ENCODE measurements at regions of chr2 and their contacts with region 1.

Region 1: DNA sequence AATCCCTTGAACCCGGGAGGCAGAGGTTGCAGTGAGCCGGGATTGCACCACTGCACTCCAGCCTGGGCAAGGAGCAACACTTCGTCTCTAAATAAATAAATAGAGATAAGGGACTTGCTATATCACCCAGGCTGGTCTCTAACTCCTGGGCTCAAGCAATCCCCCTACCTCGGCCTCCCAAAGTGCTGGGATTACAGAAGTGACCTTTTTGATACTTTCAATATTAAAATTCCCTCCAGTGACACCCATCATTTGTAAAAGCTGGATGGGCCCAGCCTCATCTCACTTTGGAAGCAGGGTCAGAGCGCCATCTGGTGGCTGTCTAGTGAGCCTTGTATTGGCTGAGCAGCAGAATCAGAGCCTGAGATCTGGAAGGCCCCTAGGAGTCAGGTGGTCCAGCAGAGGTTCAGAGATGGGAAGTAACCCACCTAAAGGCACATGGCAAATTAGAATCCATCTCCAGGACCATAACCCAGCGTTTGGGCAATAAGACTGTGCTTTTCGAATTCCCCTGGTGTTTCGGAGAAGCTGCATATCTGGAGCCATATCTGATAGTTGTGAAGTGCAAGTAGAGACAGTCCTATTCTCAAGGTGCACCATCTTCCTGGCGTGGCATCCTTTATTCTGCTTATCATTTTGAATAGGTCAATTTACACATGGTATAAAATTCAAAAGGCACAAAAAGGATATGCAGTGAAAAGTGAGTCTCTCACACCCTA is 18.3 kb upstream of the SLC35F6 start:
- DNase-seq: peak; percentile 78 to 90 (median 83)
- ATAC-seq: peak; percentile 93
- H3K4me3 ChIP-seq: no peak overlapping the region
- H3K27ac ChIP-seq: no peak overlapping the region
- H3K4me1 ChIP-seq: peaks cover 9 to 14% of the 10 kb centered on the region in 2 experiments
- H3K27me3 ChIP-seq: 0 out of 5 replicates have a peak, but pooled peaks cover 0 to 5% of the 10 kb centered on the region in 2 experiments
- CTCF ChIP-seq: peak; percentile 91 to 96 (median 92)
- EP300 ChIP-seq: no peak
- POLR2A ChIP-seq: no peak
- RAD21 ChIP-seq: peak; percentile 97

Region 2: DNA sequence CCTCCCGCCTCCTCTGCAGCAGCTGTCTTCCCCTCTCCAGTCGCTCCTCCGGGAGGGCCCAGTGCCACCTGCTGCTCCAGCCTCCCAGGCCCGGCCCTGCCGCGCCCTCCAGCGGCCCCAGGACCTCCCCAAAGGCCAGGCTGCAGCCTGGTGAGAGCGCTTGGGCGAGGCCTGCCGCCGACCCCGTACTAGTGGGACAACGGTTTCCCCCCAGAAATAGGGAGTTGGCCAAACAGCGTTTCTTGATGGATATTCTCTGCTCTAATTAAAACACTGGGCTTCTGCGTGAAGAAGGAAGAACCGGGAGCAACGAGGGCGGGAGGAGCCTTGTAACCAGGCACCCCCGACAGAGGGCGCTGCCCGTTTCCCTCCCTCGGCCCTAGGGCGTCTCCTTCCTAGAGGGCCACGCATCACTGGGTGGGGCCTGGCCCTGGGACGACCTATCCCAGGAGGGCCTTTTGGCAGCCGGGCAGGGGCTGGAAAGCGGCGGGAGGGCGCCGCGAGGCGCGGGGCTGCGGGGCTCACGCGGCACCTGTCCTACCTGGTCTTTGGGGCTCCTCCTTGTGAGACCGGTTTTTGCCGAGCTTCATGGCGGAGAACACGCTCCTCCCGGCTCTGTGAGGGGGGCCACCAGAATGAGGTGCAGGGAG is 242.4 kb before region 1 on chr2:
- CTCF ChIA-PET with region 1: no interaction called
- POLR2A ChIA-PET with region 1: no interaction called
- in situ Hi-C with region 1: no loop called
- intact Hi-C with region 1: loop called (anchors 10 kb)
- DNase-seq: peak; percentile 93 to 99 (median 98)
- ATAC-seq: peak; percentile 99
- H3K4me3 ChIP-seq: peak overlapping the region; percentile 44
- H3K27ac ChIP-seq: no peak overlapping the region; the same call in 1 of the 3 replicates
- H3K4me1 ChIP-seq: peaks cover 0 to 13% of the 10 kb centered on the region in 2 experiments; a peak in 3 of 5 replicates
- H3K27me3 ChIP-seq: peaks cover 13 to 29% of the 10 kb centered on the region in 2 experiments; a peak in 4 of 5 replicates
- CTCF ChIP-seq: peak; percentile 79 to 99 (median 82)
- EP300 ChIP-seq: 0 out of 2 replicates have a peak, but pooled peaks have one; percentile 4
- POLR2A ChIP-seq: peak; percentile 69
- RAD21 ChIP-seq: peak; percentile 77

Region 3: GRCh38 chr2:26605195-26605998 is 140.4 kb before region 1 on chr2:
- CTCF ChIA-PET with region 1: interaction called, 46 read pairs
- POLR2A ChIA-PET with region 1: no interaction called
- in situ Hi-C with region 1: loop called (anchors 5 kb)
- intact Hi-C with region 1: loop called (anchors 1 kb)
- DNase-seq: peak; percentile 60 to 70 (median 69)
- ATAC-seq: peak; percentile 85
- H3K4me3 ChIP-seq: no peak overlapping the region
- H3K27ac ChIP-seq: no peak overlapping the region
- H3K4me1 ChIP-seq: no peaks in the 10 kb centered on the region
- H3K27me3 ChIP-seq: peaks cover 7 to 39% of the 10 kb centered on the region in 2 experiments; a peak in 4 of 5 replicates
- CTCF ChIP-seq: peak; percentile 79 to 90 (median 89)
- EP300 ChIP-seq: no peak
- POLR2A ChIP-seq: no peak
- RAD21 ChIP-seq: peak; percentile 94 to 95

Region 4: GRCh38 chr2:26682165-26682564 is 63.6 kb before region 1 on chr2:
- CTCF ChIA-PET with region 1: interaction called, 5 read pairs
- POLR2A ChIA-PET with region 1: no interaction called
- in situ Hi-C with region 1: no loop called
- intact Hi-C with region 1: loop called (anchors 5 kb)
- DNase-seq: no peak
- ATAC-seq: no peak
- H3K4me3 ChIP-seq: no peak overlapping the region
- H3K27ac ChIP-seq: no peak overlapping the region
- H3K4me1 ChIP-seq: no peaks in the 10 kb centered on the region
- H3K27me3 ChIP-seq: peaks cover 16 to 66% of the 10 kb centered on the region in 2 experiments
- CTCF ChIP-seq: no peak
- EP300 ChIP-seq: no peak
- POLR2A ChIP-seq: no peak
- RAD21 ChIP-seq: no peak

Region 5: DNA sequence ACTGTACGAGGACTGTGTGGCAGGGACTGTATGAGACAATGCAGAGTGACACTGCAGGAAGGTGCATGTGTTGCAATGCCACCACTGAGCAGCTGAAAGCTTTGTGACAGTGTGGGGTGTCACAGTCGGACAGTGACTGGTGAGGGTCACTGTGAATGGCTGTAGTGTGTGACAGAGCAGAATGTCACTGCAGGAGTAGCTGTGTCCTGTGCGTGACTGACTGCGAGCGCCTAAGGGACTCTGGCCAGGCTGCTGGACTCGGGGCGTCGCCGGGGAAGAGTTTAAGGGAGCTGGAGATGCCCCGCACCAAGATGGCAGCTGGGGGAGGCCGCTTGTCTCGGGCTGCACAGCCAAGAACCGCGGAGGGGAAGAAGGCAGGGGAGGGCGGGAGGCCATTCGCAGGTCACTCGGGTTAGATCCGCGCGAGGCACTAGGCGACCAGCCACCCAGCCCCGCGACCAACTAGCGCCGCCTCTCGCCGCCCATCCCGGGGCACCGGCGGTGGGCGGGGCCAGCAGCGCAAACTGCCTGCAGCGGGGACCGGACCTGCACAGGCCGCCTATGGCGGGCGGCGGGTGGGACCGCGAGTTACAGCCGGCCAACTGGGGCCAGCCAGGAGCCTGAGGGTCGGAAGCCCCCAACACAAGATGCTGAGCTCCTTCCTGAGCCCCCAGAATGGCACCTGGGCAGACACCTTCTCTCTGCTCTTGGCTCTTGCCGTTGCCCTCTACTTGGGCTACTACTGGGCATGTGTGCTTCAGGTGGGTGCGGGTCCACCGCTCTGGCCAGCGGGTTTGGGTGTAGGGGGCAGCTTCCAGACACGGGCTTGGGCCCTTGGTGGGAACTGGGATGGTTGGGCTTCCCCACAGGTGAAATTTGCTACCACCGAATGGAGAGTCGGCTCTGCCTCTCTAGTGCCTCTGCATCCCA is 377.8 kb after region 1 on chr2 and contains the start of gene ABHD1:
- CTCF ChIA-PET with region 1: no interaction called
- POLR2A ChIA-PET with region 1: no interaction called
- in situ Hi-C with region 1: no loop called
- intact Hi-C with region 1: no loop called
- DNase-seq: peak; percentile 63 to 91 (median 78)
- ATAC-seq: peak; percentile 90
- H3K4me3 ChIP-seq: peak within 1 kb of the TSS; percentile 54
- H3K27ac ChIP-seq: no peak within 1 kb of the TSS
- H3K4me1 ChIP-seq: peaks cover 10 to 18% of the 10 kb centered on the region in 2 experiments; a peak in 4 of 5 replicates
- H3K27me3 ChIP-seq: peaks cover 7 to 11% of the 10 kb centered on the region in 2 experiments; a peak in 4 of 5 replicates
- CTCF ChIP-seq: peak in 1 of 3 experiments; percentile 20; a peak in 1 of 6 replicates
- EP300 ChIP-seq: no peak
- POLR2A ChIP-seq: no peak
- RAD21 ChIP-seq: no peak
- polyA plus RNA-seq, gene ABHD1: 0.11 TPM in 1 of 2 experiments, not detected in the other

Measured in K562 (cell line).